ENCODE measurements at regions of chr1 and their contacts with region 1.

Region 1: DNA sequence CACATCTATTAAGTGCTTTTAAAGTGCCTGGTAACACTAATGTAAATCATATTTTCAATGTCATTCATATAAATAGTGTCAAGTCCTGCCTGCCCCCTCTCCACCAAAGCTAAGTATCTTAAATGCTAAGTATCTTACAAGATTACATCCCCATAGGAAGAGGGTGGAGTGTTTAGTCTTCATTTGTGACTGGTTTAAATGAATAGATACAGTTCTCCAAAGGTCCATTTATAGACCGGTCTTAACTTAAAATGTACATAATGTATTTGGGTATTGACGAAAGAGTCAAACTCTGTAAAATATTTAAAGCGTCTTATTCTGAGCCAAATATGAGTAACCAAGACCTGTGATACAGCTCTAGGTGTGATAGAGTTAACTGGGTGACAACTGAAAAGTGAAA is 60.2 kb downstream of the POU2F1 start:
- DNase-seq: no peak
- ATAC-seq: no peak
- H3K4me3 ChIP-seq: no peak overlapping the region
- H3K4me3 Mint-ChIP-seq: no peak overlapping the region
- H3K27ac ChIP-seq: no peak overlapping the region
- H3K27ac Mint-ChIP-seq: no peak overlapping the region
- H3K4me1 ChIP-seq: no peaks in the 10 kb centered on the region
- H3K4me1 Mint-ChIP-seq: peaks cover 58% of the 10 kb centered on the region
- H3K27me3 ChIP-seq: no peaks in the 10 kb centered on the region
- H3K27me3 Mint-ChIP-seq: no peaks in the 10 kb centered on the region
- CTCF ChIP-seq: no peak

Region 2: DNA sequence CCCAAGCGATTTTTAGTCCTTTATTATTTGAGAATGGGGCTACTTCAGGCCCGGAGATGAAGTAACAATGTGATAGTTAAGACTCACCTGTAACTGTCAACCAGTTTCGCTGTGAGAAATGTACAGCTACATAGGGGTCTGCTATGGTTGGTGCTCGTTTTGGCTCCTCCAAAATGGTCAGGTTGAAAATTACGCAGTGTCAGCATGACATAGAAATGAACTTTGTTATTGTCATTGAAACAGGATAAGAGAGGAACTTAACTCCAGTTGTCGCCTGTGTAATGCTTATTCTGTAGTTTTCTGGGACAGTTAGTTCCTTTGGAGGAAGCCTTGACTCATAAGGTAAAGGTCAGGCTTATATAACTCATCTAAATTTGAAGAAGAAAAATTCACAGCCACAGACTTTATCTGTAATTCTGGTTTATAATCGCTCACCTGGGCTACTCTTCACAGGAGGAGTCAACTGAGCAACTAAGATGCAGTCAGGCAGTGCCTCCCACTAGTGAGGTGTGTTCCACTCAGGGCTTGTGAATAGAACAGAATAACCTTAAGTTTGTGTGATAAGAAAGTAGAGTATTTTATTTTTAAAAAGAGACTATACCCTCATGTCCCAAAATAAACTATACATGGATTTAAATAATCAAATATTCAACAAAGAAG is 106.5 kb after region 1 on chr1:
- CTCF ChIA-PET with region 1: no interaction called
- POLR2A ChIA-PET with region 1: no interaction called
- intact Hi-C with region 1: loop called in 1 of 2 experiments (anchors 5 kb)
- DNase-seq: no peak
- ATAC-seq: no peak
- H3K4me3 ChIP-seq: no peak overlapping the region
- H3K4me3 Mint-ChIP-seq: no peak overlapping the region
- H3K27ac ChIP-seq: no peak overlapping the region
- H3K27ac Mint-ChIP-seq: no peak overlapping the region
- H3K4me1 ChIP-seq: no peaks in the 10 kb centered on the region
- H3K4me1 Mint-ChIP-seq: no peaks in the 10 kb centered on the region
- H3K27me3 ChIP-seq: no peaks in the 10 kb centered on the region
- H3K27me3 Mint-ChIP-seq: no peaks in the 10 kb centered on the region
- CTCF ChIP-seq: no peak

Region 3: GRCh38 chr1:168092566-168093355 is 811.8 kb after region 1 on chr1:
- CTCF ChIA-PET with region 1: no interaction called
- POLR2A ChIA-PET with region 1: no interaction called
- intact Hi-C with region 1: no loop called
- DNase-seq: no peak
- ATAC-seq: no peak
- H3K4me3 ChIP-seq: no peak overlapping the region
- H3K4me3 Mint-ChIP-seq: no peak overlapping the region
- H3K27ac ChIP-seq: no peak overlapping the region
- H3K27ac Mint-ChIP-seq: no peak overlapping the region
- H3K4me1 ChIP-seq: no peaks in the 10 kb centered on the region
- H3K4me1 Mint-ChIP-seq: no peaks in the 10 kb centered on the region
- H3K27me3 ChIP-seq: no peaks in the 10 kb centered on the region
- H3K27me3 Mint-ChIP-seq: no peaks in the 10 kb centered on the region
- CTCF ChIP-seq: no peak